Psoas muscle (tissue), 8 donors: ENCODE measurements at regions of chr18 and their contacts with region 1.

Region 1: GRCh38 chr18:75209129-75209950 is at the start of gene PTGR3:
- DNase-seq: peak; percentile 90 to 94
- ATAC-seq: peak; percentile 45 to 75 (median 63)
- H3K4me3 ChIP-seq: peak within 1 kb of the TSS; percentile 87
- H3K27ac ChIP-seq: peak within 1 kb of the TSS; percentile 99
- H3K4me1 ChIP-seq: peaks cover 45% of the 10 kb centered on the region
- H3K27me3 ChIP-seq: no peaks in the 10 kb centered on the region
- CTCF ChIP-seq: no peak
- total RNA-seq, gene PTGR3: 29.0 to 66.4 (median 52.8) TPM

Region 2: DNA sequence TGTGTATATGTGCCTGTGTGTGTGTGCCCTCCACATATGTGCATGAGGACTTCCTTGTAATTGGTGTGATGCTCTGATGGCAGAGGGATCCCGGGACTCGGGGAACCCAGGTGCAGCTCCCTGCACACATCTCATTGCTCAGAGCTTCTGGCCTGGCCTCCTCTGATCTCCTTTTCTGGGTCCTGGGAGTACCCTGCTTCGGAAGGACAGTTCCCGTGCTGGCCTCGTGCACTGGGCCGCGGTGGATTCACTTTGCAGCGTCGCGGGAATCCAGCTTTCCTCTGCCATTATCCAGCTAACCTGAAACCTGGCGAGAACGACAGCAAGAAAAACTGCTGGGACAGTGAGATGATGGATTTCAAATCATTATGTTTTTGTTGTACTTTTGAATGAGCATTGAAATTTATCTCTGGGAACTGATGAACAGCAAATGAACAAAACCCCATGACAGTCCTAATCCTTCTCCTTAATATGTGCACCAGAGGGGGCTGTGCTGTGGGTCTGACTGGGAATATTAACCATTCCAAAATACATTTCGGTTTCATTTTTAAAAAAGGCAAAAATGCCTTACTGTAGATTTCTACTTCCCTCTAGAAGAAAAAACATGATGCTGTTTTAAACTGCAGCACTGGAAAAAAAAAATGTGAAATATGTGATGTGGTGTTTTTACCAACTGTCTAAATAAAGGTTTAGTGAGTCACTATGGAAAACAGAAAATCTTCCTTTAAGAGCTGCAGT is 78.6 kb before region 1 on chr18:
- intact Hi-C with region 1: loop called in 1 of 2 experiments (anchors 1 kb)
- DNase-seq: no peak
- ATAC-seq: no peak
- H3K4me3 ChIP-seq: peak overlapping the region; percentile 35
- H3K27ac ChIP-seq: no peak overlapping the region
- H3K4me1 ChIP-seq: peaks cover 3% of the 10 kb centered on the region
- H3K27me3 ChIP-seq: no peaks in the 10 kb centered on the region
- CTCF ChIP-seq: no peak

Region 3: DNA sequence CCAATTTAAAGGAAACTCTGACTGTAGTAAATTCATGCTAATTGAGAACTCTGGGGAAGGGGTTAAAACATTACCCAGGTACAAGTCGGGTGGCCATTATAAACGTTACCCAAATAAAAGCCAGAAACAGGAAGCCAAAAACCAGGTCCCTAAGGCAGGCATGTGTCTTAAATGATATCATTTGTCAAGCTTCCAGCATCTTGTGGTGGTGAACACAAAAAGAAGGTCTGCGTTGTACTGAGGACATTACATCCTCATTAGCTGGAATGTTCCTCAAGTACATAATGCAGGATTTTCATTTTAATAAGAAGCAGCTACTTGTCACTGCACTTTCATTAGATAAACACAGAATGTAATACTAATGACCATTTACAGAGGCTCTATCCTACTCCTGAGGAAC is 11.3 kb before region 1 on chr18:
- intact Hi-C with region 1: loop called in 1 of 2 experiments (anchors 2 kb)
- DNase-seq: no peak
- ATAC-seq: no peak
- H3K4me3 ChIP-seq: no peak overlapping the region
- H3K27ac ChIP-seq: no peak overlapping the region
- H3K4me1 ChIP-seq: peaks cover 50% of the 10 kb centered on the region
- H3K27me3 ChIP-seq: no peaks in the 10 kb centered on the region
- CTCF ChIP-seq: no peak

Region 4: DNA sequence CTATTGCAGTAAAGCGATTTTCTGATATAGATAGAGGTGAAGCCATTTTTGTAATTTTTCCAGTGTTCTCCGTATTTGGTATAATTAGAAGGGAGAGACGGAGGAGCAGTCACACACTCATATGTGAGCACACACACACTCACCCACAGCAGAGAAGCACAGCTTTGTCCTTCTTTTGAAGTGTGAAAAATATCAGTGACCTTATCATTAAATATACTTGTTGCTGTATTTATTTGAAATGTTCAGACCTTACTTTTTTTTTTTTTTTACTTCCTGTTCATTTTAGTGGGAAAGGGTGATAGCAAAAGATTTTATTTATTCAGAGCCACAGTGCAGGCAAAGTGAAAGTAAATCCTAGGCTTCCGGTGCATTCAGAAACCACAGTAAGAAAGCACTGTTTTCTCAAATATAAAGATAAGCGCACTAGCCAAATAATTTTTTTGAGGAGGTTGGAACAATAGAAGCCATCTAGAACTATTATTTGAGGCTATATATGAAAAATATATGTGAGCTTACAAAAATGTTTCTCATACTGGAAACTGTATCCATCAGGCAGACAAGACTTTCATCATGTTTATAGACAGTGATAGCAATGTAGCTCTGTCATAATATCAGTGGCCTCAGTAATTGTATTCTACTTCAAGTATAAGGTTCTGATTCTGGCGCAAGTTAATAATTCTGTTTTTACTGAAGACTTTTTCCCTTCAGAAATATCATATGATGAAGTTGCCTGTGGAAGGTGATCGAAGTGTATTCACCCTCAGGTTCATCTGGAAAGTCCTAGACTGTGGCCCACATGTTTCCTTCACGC is 38.5 kb after region 1 on chr18:
- intact Hi-C with region 1: loop called (anchors 5 kb)
- DNase-seq: no peak
- ATAC-seq: peak in 3 of 4 donors; percentile 49 to 66 (median 56)
- H3K4me3 ChIP-seq: peak overlapping the region; percentile 63
- H3K27ac ChIP-seq: peak overlapping the region; percentile 74
- H3K4me1 ChIP-seq: peaks cover 38% of the 10 kb centered on the region
- H3K27me3 ChIP-seq: no peaks in the 10 kb centered on the region
- CTCF ChIP-seq: no peak

Region 5: GRCh38 chr18:76546088-76546435 is 1336.7 kb after region 1 on chr18:
- intact Hi-C with region 1: no loop called
- DNase-seq: no peak
- ATAC-seq: no peak
- H3K4me3 ChIP-seq: no peak overlapping the region
- H3K27ac ChIP-seq: no peak overlapping the region
- H3K4me1 ChIP-seq: no peaks in the 10 kb centered on the region
- H3K27me3 ChIP-seq: peaks cover 0 to 5% (median 0%) of the 10 kb centered on the region in 3 donors
- CTCF ChIP-seq: no peak